ENCODE measurements at regions of chr7 and their contacts with region 1.

Region 1: DNA sequence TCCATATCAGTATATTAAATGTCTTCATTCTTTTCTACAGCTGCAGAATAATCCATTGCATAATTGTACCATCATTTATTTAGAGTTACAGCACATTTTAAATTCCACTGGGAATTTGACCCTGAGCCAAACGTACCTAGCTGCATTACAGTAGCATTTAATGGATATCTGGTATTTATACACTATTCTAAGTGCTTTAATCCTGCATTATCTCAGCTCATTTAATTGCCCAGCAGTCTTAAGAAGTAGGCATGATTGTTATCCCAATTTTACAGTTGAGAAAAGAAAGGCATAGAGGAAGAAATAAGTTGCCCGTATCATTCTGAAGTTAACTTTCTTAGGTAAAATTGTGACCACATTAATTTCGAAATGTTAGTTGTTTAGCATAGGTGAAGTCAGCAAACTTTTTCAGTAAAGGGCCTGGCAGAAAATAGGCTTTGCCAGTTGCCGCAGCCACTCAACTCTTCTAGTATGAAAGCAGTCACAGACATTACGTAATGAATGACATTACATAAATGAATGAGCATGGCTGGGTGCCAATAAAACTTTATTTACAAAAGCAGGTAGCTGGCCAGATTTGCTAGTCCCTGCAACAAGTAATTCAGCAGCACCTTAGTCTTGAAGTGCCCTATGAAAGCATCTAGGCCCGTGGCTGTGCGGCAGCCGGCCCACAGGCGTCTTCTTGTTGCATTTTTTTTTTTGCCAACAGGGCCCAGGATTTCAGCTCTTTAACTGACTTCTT is 30.0 kb downstream of the GUSB start:
- DNase-seq: no peak
- ATAC-seq: no peak
- H3K4me3 ChIP-seq: no peak overlapping the region
- H3K27ac ChIP-seq: no peak overlapping the region
- H3K4me1 ChIP-seq: no peaks in the 10 kb centered on the region
- H3K27me3 ChIP-seq: no peaks in the 10 kb centered on the region
- CTCF ChIP-seq: no peak
- POLR2A ChIP-seq: no peak
- RAD21 ChIP-seq: no peak

Region 2: DNA sequence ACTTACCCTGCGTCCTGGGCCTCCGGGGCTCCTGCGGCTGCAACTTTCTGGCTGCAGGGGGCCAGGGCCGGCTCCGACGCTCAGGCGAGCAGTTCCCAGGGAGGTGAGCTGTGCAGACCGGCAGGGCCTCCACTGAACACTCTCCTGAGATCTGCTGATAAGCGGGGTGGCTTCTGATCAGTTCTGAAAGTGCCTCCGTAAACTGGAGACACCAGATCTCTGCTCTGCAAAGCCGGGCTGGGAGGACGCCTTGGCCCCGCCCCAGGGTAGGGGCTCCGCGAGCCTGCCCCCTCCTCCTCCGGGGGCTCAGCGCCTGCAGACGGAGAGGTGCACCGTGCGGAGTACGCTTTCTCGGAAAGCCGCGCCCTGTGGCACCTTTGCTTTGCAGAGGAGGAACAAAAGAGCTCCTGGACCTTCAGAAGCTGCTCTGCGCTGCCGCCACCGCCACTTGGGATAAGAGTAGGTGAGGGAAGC is 220.4 kb before region 1 on chr7:
- CTCF ChIA-PET with region 1: no interaction called
- POLR2A ChIA-PET with region 1: no interaction called
- dilution Hi-C with region 1: no loop called
- in situ Hi-C with region 1: loop called (anchors 25 kb)
- intact Hi-C with region 1: no loop called
- DNase-seq: no peak
- ATAC-seq: peak; percentile 79
- H3K4me3 ChIP-seq: no peak overlapping the region
- H3K27ac ChIP-seq: no peak overlapping the region
- H3K4me1 ChIP-seq: no peaks in the 10 kb centered on the region
- H3K27me3 ChIP-seq: no peaks in the 10 kb centered on the region
- CTCF ChIP-seq: no peak
- POLR2A ChIP-seq: no peak
- RAD21 ChIP-seq: peak; percentile 22

Region 3: GRCh38 chr7:65907501-65908198 is 44.4 kb before region 1 on chr7:
- CTCF ChIA-PET with region 1: no interaction called
- POLR2A ChIA-PET with region 1: no interaction called
- dilution Hi-C with region 1: no loop called
- in situ Hi-C with region 1: no loop called
- intact Hi-C with region 1: no loop called
- DNase-seq: no peak
- ATAC-seq: no peak
- H3K4me3 ChIP-seq: no peak overlapping the region
- H3K27ac ChIP-seq: no peak overlapping the region
- H3K4me1 ChIP-seq: peaks cover 3% of the 10 kb centered on the region
- H3K27me3 ChIP-seq: no peaks in the 10 kb centered on the region
- CTCF ChIP-seq: no peak
- POLR2A ChIP-seq: no peak
- RAD21 ChIP-seq: no peak

Region 4: DNA sequence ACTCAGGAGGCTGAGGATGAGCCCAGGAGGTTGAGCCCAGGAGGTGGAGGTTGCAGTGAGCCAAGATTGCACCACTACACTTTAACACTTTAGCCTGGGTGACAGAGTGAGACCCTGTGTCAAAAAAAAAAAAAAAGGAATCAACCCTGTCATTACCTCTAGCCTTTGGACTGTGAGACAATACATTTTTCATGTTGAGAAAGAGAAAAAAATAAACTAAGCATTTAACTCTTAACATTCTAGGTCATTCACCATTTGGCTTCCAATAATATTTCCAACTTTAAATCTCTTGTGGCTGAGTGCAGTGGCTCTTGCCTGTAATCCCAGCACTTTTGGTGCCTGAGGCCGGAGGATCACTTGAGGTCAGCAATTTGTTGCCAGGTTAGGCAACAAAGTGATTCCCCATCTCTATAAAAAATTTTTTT is 211.2 kb after region 1 on chr7:
- CTCF ChIA-PET with region 1: no interaction called
- POLR2A ChIA-PET with region 1: no interaction called
- dilution Hi-C with region 1: no loop called
- in situ Hi-C with region 1: no loop called
- intact Hi-C with region 1: no loop called
- DNase-seq: no peak
- ATAC-seq: no peak
- H3K4me3 ChIP-seq: no peak overlapping the region
- H3K27ac ChIP-seq: no peak overlapping the region
- H3K4me1 ChIP-seq: peaks cover 6% of the 10 kb centered on the region
- H3K27me3 ChIP-seq: no peaks in the 10 kb centered on the region
- CTCF ChIP-seq: no peak
- POLR2A ChIP-seq: no peak
- RAD21 ChIP-seq: no peak

Measured in IMR-90 (cell line).